PC-3 (cell line): ENCODE measurements at regions of chr16 and their contacts with region 1.

Region 1: GRCh38 chr16:11742539-11743307 is at the start of gene TXNDC11:
- DNase-seq: peak; percentile 96
- ATAC-seq: peak; percentile 88
- H3K4me3 ChIP-seq: peak within 1 kb of the TSS; percentile 99
- H3K27ac ChIP-seq: peak within 1 kb of the TSS; percentile 69
- H3K4me1 ChIP-seq: peaks cover 20% of the 10 kb centered on the region
- H3K27me3 ChIP-seq: no peaks in the 10 kb centered on the region
- CTCF ChIP-seq: no peak
- total RNA-seq, gene TXNDC11: 20.2 and 26.6 TPM in 2 replicates

Region 2: DNA sequence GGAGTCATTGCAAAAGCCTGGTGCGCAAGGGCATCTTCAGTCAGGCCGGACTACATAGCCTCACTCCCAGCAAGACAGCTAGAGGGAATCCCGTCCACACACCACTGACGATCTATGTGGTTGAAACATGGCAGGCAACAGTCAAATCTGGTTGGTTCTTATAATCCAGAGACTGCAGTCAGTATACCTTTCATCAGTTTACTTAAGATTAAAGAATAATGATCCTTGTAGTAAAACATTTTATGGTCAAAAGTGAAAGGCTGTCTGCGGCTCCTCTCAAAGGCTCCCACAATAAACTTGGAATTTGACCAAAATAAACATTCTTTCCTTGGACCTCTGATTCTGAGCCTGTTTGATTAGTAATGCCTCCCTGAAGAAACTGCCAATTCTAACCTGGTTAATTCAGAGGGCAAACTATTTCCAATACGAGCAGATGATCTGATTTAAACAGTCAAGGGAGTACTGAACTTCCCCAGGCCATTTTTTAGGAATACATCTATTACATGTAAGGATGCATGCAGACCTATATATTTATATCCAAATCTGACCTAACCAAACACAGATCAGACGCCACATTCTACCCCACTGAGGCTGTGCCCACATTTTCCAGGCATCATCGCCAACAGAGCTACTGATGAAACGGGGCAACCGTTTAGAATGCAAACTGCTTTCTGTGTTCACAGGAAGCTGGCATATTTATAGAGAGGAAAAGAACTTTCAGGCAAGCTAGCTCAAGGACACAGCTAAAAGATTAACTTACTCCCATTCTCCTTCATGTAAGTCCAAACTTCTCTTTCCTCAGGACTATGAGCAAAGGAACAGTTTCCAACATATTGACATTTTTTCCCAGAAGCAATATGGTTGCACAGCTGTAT is 15.2 kb after region 1 on chr16:
- CTCF ChIA-PET with region 1: no interaction called
- POLR2A ChIA-PET with region 1: no interaction called
- intact Hi-C with region 1: loop called (anchors 1 kb)
- DNase-seq: peak; percentile 66
- ATAC-seq: peak; percentile 62
- H3K4me3 ChIP-seq: no peak overlapping the region
- H3K27ac ChIP-seq: 0 out of 2 replicates have a peak overlapping the region, but pooled peaks have one; percentile 11
- H3K4me1 ChIP-seq: peaks cover 12% of the 10 kb centered on the region
- H3K27me3 ChIP-seq: no peaks in the 10 kb centered on the region
- CTCF ChIP-seq: no peak